ENCODE measurements at regions of chr5 and their contacts with region 1.

Region 1: GRCh38 chr5:79020861-79021561 is 35.9 kb upstream of the ARSB start:
- DNase-seq: peak; percentile 36
- H3K4me3 ChIP-seq: no peak overlapping the region
- H3K27me3 ChIP-seq: no peaks in the 10 kb centered on the region
- CTCF ChIP-seq: peak; percentile 88

Region 2: GRCh38 chr5:78984439-78985115 is 36.4 kb before region 1 on chr5:
- CTCF ChIA-PET with region 1: interaction called, 65 read pairs
- POLR2A ChIA-PET with region 1: no interaction called
- DNase-seq: peak; percentile 44
- H3K4me3 ChIP-seq: peak overlapping the region; percentile 72
- H3K27me3 ChIP-seq: no peaks in the 10 kb centered on the region
- CTCF ChIP-seq: peak; percentile 59

Region 3: DNA sequence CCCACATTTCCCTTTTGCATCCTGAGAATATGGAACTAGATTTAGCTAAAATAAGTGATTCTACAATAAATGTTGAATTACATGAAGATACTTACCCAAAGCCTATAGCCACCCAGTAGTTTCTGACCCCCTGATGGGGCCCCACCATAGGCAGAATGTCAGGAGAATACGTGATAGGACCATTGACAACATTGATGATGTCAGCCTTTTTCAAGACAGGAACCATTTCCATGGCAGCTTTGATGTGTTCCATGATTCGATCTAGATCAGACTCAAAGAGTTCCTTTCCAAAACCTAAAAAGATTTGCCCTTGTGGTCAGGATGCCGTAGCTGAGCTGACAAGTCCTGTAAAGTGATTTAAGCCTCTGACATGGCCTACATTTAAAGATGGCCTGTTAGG is 21.2 kb after region 1 on chr5:
- CTCF ChIA-PET with region 1: interaction called, 10 read pairs
- POLR2A ChIA-PET with region 1: no interaction called
- DNase-seq: no peak
- H3K4me3 ChIP-seq: no peak overlapping the region
- H3K27me3 ChIP-seq: no peaks in the 10 kb centered on the region; the same call in 1 of the 2 replicates
- CTCF ChIP-seq: no peak

Region 4: DNA sequence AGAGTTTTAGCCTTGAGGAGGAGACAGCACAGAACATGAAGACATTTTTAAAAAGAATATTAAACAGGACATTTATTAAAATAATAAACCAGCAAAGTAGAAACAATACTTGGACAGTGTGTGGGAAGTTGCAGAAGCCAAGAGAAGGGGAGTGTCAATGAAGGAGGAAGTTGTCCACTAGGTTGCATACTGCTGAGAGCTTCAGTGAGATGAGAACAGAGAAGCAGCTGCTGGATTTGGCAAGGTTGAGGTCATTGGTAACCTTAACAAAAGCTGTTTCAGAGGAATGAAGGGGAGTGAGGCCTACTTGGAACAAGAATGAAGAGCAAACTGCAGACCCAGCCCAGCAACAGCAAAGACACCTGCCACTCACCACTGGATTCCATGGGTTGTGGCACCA is 102.0 kb after region 1 on chr5:
- CTCF ChIA-PET with region 1: interaction called, 439 read pairs
- POLR2A ChIA-PET with region 1: no interaction called
- DNase-seq: no peak
- H3K4me3 ChIP-seq: no peak overlapping the region
- H3K27me3 ChIP-seq: no peaks in the 10 kb centered on the region
- CTCF ChIP-seq: no peak

Region 5: GRCh38 chr5:79464695-79465332 is 443.8 kb after region 1 on chr5:
- CTCF ChIA-PET with region 1: interaction called, 95 read pairs
- POLR2A ChIA-PET with region 1: no interaction called
- DNase-seq: no peak
- H3K4me3 ChIP-seq: no peak overlapping the region
- H3K27me3 ChIP-seq: no peaks in the 10 kb centered on the region
- CTCF ChIP-seq: peak; percentile 55

Measured in BJ (cell line).